Right cardiac atrium (tissue), 5 donors: ENCODE measurements at regions of chr5 and their contacts with region 1.

Region 1: DNA sequence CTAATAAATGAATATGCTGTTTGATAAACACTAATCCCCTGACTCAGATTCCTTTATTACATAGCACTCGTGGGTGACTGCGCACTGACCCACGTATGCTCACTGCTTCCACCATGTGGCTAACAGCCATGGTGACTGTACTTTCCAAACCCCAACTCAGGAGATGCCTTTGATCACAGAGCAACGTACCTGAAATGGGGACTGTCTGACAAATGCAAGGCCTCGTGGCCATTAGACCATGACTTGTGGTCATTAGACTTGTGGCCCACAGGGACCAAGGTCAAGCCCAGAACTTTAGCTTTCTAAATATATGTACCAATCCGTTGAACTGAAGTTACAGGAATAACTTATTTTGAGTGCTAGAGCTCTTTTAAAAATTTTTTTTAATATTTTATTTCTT is 46.6 kb downstream of the CYFIP2 start:
- DNase-seq: peak in 1 of 3 donors; percentile 63
- ATAC-seq: peak; percentile 50 to 72
- H3K4me3 ChIP-seq: no peak overlapping the region
- H3K27ac ChIP-seq: no peak overlapping the region
- H3K4me1 ChIP-seq: no peaks in the 10 kb centered on the region
- H3K27me3 ChIP-seq: no peaks in the 10 kb centered on the region

Region 2: DNA sequence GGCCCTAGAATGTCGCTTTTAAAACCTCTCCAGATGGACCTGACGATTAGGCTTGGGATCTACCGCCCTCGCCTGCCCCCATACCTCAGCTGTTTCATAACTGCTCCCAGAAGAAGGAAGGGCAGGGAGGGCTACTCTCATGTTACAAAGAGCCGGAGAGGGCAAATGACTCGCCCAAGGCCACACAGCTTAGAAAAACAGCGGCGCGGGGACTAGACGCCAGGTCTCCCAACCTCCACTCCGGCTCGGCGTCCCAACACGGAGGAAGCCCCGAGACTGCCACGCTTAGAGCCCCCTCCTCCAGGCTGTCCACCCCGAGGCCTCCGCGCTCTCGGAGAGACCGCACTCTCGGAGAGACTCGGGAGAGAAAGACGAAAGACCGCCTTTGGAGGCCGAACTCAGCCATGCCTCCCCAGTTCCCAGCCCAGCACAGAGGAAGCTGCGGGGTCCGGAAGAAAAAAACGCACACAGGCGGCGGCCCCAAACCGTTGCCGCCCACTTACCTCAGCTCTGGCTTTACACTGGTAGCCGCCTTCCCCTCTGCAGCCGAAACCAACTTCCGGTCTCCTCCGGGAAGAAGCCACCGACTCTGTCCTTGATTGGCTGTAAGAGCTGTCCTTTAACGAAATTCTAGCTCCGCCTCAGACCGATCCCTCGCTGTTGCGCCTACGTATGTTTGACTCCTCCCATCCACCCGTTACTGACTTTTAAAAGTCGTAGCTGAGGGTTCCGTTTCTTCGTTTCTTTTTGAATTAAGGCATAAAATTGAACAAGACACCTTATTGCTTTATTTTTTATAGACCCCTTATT is 170.0 kb before region 1 on chr5 and contains the start of gene MED7:
- intact Hi-C with region 1: loop called in 1 of 4 experiments (anchors 10 kb)
- DNase-seq: peak; percentile 92 to 95 (median 94)
- ATAC-seq: peak; percentile 99
- H3K4me3 ChIP-seq: peak within 1 kb of the TSS; percentile 69
- H3K27ac ChIP-seq: peak within 1 kb of the TSS; percentile 98
- H3K4me1 ChIP-seq: peaks cover 2% of the 10 kb centered on the region
- H3K27me3 ChIP-seq: no peaks in the 10 kb centered on the region
- total RNA-seq, gene MED7: 9.6 to 10.6 (median 10.2) TPM

Region 3: GRCh38 chr5:157159209-157159751 is 153.2 kb before region 1 on chr5:
- intact Hi-C with region 1: loop called in 1 of 4 experiments (anchors 10 kb)
- DNase-seq: no peak
- ATAC-seq: no peak
- H3K4me3 ChIP-seq: no peak overlapping the region
- H3K27ac ChIP-seq: no peak overlapping the region
- H3K4me1 ChIP-seq: no peaks in the 10 kb centered on the region
- H3K27me3 ChIP-seq: no peaks in the 10 kb centered on the region

Region 4: GRCh38 chr5:157245477-157245876 is 67.0 kb before region 1 on chr5:
- intact Hi-C with region 1: loop called in 3 of 4 experiments (anchors 5 kb)
- DNase-seq: no peak
- ATAC-seq: peak in 1 of 2 donors; percentile 28
- H3K4me3 ChIP-seq: no peak overlapping the region
- H3K27ac ChIP-seq: no peak overlapping the region
- H3K4me1 ChIP-seq: peaks cover 3% of the 10 kb centered on the region
- H3K27me3 ChIP-seq: no peaks in the 10 kb centered on the region

Region 5: DNA sequence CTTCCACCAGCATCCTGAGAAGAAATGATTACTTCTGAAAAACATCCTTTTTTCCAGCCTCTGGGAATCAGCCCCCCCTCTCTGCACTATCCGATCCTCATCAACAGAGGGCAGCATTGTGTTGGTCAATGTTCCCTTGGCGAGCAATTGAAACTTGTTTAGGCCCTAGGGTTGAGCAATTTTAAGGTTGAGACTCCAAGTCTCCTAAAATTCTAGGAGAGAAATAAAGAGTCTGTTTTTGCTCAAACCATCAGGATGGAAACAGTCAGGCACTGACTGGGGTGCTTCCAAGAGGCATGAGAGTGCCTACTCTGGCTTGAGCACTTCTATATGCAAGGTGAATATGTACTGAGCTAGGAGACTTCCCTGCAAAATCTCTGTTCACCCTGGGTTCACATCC is 58.9 kb before region 1 on chr5:
- intact Hi-C with region 1: loop called (anchors 5 kb)
- DNase-seq: peak; percentile 28 to 54 (median 52)
- ATAC-seq: peak; percentile 83 to 86
- H3K4me3 ChIP-seq: no peak overlapping the region
- H3K27ac ChIP-seq: no peak overlapping the region
- H3K4me1 ChIP-seq: no peaks in the 10 kb centered on the region
- H3K27me3 ChIP-seq: no peaks in the 10 kb centered on the region

Region 6: GRCh38 chr5:157259699-157260098 is 52.8 kb before region 1 on chr5:
- intact Hi-C with region 1: loop called in 3 of 4 experiments (anchors 5 kb)
- DNase-seq: no peak
- ATAC-seq: no peak
- H3K4me3 ChIP-seq: no peak overlapping the region
- H3K27ac ChIP-seq: no peak overlapping the region
- H3K4me1 ChIP-seq: no peaks in the 10 kb centered on the region
- H3K27me3 ChIP-seq: no peaks in the 10 kb centered on the region

Region 7: DNA sequence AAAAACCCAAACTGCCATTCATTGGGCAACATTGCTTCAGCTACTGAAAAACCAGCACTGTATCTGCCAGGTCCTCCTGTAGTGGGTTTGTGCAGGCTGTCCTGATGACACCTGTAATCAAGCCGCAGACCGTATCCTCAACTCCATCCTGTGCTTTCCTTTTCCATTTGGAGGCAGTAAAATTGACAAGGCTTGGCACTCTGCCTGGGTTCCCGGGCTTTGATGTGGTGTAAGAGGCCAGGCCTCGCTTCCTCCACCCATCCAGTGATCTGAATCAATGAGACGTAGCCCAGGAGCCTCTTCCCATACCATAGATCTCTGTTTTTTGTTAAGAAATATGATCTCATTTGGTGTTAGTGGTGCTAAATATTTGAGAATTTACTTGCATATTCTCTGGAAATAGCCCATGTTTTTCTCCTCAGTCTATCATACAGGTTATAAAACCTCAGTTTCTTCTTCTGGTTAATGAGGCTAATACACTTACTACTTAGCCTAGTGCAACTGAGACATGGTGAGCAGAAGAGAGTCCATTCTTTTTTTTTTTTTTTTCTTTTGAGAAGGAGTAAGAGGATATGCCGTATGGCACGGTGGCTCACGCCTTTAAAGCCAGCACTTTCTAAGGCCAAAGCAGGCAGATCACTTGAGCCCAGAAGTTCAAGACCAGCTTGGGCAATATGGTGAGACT is 465.8 kb after region 1 on chr5:
- intact Hi-C with region 1: no loop called
- DNase-seq: no peak
- ATAC-seq: no peak
- H3K4me3 ChIP-seq: no peak overlapping the region
- H3K27ac ChIP-seq: no peak overlapping the region
- H3K4me1 ChIP-seq: peaks cover 1% of the 10 kb centered on the region
- H3K27me3 ChIP-seq: no peaks in the 10 kb centered on the region